ENCODE measurements at regions of chr6 and their contacts with region 1.

Region 1: GRCh38 chr6:4281341-4282293 is 146.2 kb upstream of the ECI2 start:
- DNase-seq: peak; percentile 68 to 82
- ATAC-seq: peak; percentile 90 to 92
- H3K4me3 ChIP-seq: peak overlapping the region; percentile 28 to 54 (median 34)
- H3K27ac ChIP-seq: peak overlapping the region in 3 of 4 donors; percentile 55 to 61 (median 58)
- H3K4me1 ChIP-seq: peaks cover 0 to 8% of the 10 kb centered on the region in 2 donors
- H3K27me3 ChIP-seq: no peaks in the 10 kb centered on the region
- CTCF ChIP-seq: peak; percentile 64 to 76 (median 70)
- POLR2A ChIP-seq: no peak

Region 2: GRCh38 chr6:2596222-2596621 is 1685.4 kb before region 1 on chr6:
- in situ Hi-C with region 1: no loop called
- intact Hi-C with region 1: no loop called
- DNase-seq: no peak
- ATAC-seq: no peak
- H3K4me3 ChIP-seq: no peak overlapping the region
- H3K27ac ChIP-seq: no peak overlapping the region
- H3K4me1 ChIP-seq: no peaks in the 10 kb centered on the region
- H3K27me3 ChIP-seq: no peaks in the 10 kb centered on the region
- CTCF ChIP-seq: peak in 2 of 5 experiments; percentile 17 to 25
- POLR2A ChIP-seq: no peak

Region 3: GRCh38 chr6:2760882-2761842 is 1520.5 kb before region 1 on chr6:
- in situ Hi-C with region 1: no loop called
- intact Hi-C with region 1: no loop called
- DNase-seq: no peak
- ATAC-seq: no peak
- H3K4me3 ChIP-seq: no peak overlapping the region
- H3K27ac ChIP-seq: peak overlapping the region in 1 of 4 donors; percentile 21
- H3K4me1 ChIP-seq: peaks cover 6 to 26% of the 10 kb centered on the region in 2 donors
- H3K27me3 ChIP-seq: no peaks in the 10 kb centered on the region
- CTCF ChIP-seq: peak; percentile 33 to 67 (median 43)
- POLR2A ChIP-seq: no peak

Region 4: GRCh38 chr6:4319981-4320683 is 38.5 kb after region 1 on chr6:
- in situ Hi-C with region 1: no loop called
- intact Hi-C with region 1: no loop called
- DNase-seq: no peak
- ATAC-seq: no peak
- H3K4me3 ChIP-seq: no peak overlapping the region
- H3K27ac ChIP-seq: peak overlapping the region; percentile 6 to 82 (median 38)
- H3K4me1 ChIP-seq: peaks cover 41 to 68% of the 10 kb centered on the region in 2 donors
- H3K27me3 ChIP-seq: no peaks in the 10 kb centered on the region
- CTCF ChIP-seq: no peak
- POLR2A ChIP-seq: no peak

Region 5: DNA sequence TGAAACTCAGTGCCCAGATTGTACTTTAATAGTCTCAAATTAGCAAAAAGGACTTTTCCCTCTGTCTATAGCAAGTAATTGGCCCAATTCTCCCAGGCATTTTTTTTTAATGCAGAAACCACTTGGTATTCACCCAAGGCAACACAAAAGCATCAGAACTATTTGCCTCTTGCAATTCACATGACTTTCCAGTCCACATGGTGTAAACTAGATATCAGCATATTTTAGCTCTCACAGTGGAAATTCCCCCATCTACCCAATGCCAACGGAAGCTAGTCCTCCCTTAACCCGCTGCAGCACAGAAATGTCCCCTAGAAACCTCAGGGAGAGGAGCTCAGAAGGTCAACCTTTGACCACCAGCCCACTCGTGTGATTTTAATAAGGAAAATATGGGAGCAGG is 391.2 kb after region 1 on chr6:
- in situ Hi-C with region 1: no loop called
- intact Hi-C with region 1: loop called (anchors 10 kb)
- DNase-seq: no peak
- ATAC-seq: no peak
- H3K4me3 ChIP-seq: no peak overlapping the region
- H3K27ac ChIP-seq: no peak overlapping the region
- H3K4me1 ChIP-seq: no peaks in the 10 kb centered on the region
- H3K27me3 ChIP-seq: no peaks in the 10 kb centered on the region
- CTCF ChIP-seq: no peak
- POLR2A ChIP-seq: no peak

Region 6: DNA sequence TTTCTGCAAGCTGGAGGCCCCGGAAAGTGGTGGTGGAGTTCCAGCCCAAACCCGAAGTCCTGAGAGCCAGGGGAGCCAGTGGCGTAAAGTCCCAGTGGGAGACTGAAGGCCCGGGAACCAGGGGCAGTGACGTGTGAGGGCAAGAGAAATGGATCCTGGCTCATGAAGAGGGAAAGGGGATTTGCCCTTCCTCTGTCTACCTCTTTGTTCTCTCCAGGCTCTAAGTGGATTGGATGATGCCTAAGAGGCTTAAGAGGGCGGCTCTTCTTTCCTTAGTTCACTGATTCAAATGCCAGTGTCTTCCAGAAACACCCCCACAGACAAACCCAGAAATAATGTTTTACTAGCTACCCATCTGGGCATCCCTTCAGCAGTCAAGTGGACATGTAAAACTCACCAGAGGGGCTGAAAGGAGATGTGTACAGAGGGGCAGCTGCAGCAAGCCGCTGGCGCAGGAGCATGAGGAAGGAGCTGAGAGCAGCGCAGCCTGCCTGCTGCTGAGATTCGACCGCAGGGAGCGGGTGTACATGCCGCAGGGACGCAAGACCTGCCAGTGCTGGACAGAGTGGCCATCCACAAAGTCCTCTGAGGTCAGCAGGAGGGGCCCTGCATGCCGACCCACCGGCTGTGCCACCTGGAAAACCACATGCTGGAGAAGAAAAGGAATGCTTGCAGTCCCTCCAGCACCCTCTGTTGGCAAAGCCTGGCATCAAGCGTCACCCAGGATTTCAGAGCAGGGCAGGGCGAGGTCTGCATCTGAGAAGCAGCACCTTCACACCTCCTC is 524.1 kb after region 1 on chr6:
- in situ Hi-C with region 1: no loop called
- intact Hi-C with region 1: loop called (anchors 10 kb)
- DNase-seq: peak; percentile 11 to 64
- ATAC-seq: peak; percentile 68 to 82
- H3K4me3 ChIP-seq: no peak overlapping the region
- H3K27ac ChIP-seq: no peak overlapping the region
- H3K4me1 ChIP-seq: peaks cover 16 to 35% of the 10 kb centered on the region in 2 donors
- H3K27me3 ChIP-seq: no peaks in the 10 kb centered on the region
- CTCF ChIP-seq: peak; percentile 34 to 69 (median 47)
- POLR2A ChIP-seq: no peak